Head of caudate nucleus (tissue), 42 donors: ENCODE measurements at regions of chr17 and their contacts with region 1.

Region 1: GRCh38 chr17:52106638-52107261 is 51.8 kb downstream of the CA10 start:
- DNase-seq: peak in 41 of 42 donors; percentile 4 to 88 (median 63)

Region 2: DNA sequence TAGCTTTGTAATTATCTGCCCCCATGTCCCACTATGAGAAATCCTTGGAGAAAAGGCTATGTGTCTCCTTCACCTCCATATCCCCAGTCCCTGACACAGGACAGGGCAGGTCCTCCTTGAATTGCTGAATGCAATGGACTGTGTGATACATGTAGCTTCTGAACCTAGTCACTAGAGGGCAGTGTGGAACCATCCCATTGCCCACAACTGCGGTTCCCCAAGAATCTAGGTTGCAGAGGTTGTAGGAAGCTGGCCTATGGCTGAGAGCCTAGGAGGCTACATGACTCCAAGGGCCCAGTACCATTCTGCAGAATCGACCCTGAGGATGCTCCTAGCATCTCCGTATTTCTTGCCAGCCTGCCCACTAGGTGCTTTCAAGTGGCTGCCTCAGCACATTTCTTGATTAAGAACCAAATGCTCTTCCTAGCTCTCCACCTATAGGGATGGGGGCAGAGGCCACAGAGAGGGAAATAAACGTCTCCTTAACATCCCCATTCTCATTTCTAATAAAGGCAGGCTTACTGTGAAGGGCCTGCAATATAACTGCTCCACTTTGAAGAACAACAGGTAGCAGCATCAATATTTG is 342.3 kb before region 1 on chr17:
- intact Hi-C with region 1: loop called (anchors 10 kb)
- DNase-seq: peak; percentile 11 to 83 (median 54)

Region 3: GRCh38 chr17:51860954-51861561 is 245.7 kb before region 1 on chr17:
- intact Hi-C with region 1: loop called (anchors 10 kb)
- DNase-seq: peak; percentile 8 to 85 (median 62)

Region 4: GRCh38 chr17:52207796-52208195 is 101.0 kb after region 1 on chr17:
- intact Hi-C with region 1: no loop called
- DNase-seq: no peak